ENCODE measurements at regions of chr15 and their contacts with region 1.

Region 1: DNA sequence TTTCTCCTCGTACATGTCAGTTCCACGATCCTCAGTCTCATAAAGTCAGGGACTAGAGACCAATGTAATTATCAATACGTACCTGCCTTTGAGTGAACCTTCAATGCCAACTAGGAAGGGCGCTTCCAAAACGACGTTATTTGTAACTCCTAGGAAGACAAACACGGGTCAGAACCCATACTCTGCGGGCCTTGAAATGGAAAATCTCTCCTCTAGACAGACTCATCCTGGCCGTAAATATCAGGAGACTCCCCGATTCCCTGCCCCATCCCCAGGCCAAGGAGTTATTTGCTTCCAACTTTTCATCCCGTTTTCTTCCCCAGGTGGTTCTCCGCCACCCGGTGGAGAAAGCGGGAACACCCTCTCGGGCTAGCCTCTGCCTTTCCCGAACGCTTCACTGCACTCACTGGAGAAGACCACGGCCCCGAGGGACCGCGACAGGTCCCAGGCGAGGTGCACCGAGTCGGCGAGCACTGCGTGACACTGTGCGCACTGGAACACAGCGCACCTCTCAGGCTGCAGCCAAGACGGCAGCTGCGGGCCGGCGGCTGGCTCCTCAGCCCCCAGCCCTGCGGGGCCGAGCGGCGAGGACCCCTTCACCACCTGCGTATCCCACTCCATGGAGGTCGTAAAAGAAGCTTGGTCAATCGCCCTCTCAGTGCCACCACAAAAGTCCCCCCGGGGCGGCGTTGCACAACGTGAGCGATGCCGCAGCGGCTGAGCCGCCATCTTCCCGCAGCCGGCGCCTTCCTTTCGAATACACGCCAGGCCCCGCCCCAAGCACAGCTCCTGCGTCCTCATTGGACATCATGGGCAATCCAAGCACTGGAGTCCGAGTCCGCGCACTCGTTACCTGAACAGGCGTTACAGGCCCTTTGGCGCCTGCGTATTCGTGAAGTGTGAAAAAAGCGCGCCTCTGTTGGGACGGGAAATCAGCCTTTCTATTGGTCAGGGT is at the start of gene OIP5:
- DNase-seq: peak; percentile 100
- H3K4me3 ChIP-seq: peak within 1 kb of the TSS; percentile 78
- H3K27ac ChIP-seq: peak within 1 kb of the TSS; percentile 91
- H3K4me1 ChIP-seq: peaks cover 10% of the 10 kb centered on the region
- H3K27me3 ChIP-seq: no peaks in the 10 kb centered on the region
- CTCF ChIP-seq: peak; percentile 63
- total RNA-seq, gene OIP5: 31.0 and 36.1 TPM in 2 replicates

Region 2: GRCh38 chr15:41284427-41285177 is 47.5 kb before region 1 on chr15:
- CTCF ChIA-PET with region 1: interaction called, 3 read pairs
- POLR2A ChIA-PET with region 1: no interaction called
- intact Hi-C with region 1: loop called (anchors 5 kb)
- DNase-seq: peak; percentile 51
- H3K4me3 ChIP-seq: peak overlapping the region; percentile 72
- H3K27ac ChIP-seq: peak overlapping the region; percentile 94
- H3K4me1 ChIP-seq: peaks cover 10% of the 10 kb centered on the region
- H3K27me3 ChIP-seq: no peaks in the 10 kb centered on the region
- CTCF ChIP-seq: no peak